OCI-LY7 (cell line): ENCODE measurements at regions of chr6 and their contacts with region 1.

Region 1: DNA sequence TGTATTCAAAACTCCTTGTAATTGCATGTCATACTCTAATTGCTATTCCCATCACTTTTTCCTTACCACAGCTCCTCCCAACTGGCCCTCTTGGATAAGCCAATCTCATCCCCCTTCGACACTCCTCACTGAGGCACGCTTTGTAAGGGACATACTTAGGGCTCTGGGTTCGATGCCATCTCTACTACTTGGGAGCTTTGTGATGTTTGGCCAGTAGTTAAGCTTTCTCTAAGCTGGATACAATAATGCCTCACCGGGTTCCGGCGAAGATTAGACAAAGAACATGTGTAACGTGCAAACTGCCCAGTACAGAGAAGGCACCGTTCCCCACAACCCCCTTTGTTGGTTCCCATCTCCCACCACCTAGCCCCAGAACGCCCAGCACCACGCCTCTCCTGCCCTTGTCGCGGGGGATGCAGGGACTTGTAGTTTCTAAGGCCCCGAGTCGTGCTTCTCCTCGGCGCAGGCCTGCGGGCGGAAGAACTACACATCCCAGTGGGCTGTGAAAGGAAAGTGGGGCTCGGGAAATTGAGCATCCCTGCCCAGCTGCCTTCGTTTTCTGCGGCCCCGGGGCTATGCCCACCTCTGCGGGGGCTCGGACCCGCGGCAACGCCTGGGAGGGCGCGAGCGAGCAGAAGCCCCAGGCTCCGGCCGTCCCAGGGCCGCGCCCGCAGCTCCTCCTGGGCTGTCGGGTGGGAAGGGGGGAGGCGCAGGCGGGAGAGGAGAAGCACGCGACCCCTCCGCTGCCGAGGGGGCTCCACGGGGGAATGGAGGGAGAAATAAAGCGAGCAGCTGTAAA is 1.1 kb upstream of the ZDHHC14 start:
- DNase-seq: peak; percentile 92
- H3K4me3 ChIP-seq: peak overlapping the region; percentile 98
- H3K27ac ChIP-seq: peak overlapping the region; percentile 46
- H3K4me1 ChIP-seq: peaks cover 21% of the 10 kb centered on the region
- CTCF ChIP-seq: no peak

Region 2: DNA sequence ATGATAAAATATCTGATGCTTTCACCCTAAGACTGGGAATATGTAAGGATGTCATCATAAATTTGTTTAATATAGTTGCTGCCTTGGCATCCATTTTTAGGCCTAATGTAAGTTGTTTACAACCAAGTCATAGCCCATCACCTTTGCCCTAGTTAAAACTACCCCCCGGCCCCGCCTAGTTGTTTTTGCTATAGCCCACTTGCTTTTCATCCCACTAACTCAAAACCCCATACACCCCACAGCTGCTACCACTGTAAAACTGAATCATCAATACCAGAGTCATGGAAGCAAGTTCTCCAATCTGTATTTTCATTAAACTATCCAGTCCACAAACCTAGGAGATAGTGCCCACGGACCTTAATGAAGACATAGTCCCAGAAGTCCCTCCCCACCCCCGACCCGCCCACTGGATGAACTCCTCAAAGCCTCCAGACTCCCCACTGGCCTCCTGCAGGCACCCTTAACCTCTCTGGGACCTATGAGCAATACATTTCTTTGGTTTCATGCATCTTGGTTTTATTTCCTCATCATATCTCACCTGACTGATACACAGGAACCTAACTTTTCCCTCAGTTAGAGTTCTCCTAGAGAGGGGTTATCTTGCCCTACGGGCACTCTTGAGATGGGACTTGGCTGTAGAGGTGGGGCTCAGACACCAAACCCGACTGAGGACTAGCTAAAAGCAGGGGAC is 11.4 kb before region 1 on chr6:
- CTCF ChIA-PET with region 1: no interaction called
- POLR2A ChIA-PET with region 1: interaction called, 12 read pairs
- intact Hi-C with region 1: no loop called
- DNase-seq: no peak
- H3K4me3 ChIP-seq: no peak overlapping the region
- H3K27ac ChIP-seq: no peak overlapping the region
- H3K4me1 ChIP-seq: peaks cover 21% of the 10 kb centered on the region
- CTCF ChIP-seq: no peak

Region 3: GRCh38 chr6:157571269-157571668 is 191.4 kb after region 1 on chr6:
- CTCF ChIA-PET with region 1: no interaction called
- POLR2A ChIA-PET with region 1: interaction called, 7 read pairs
- intact Hi-C with region 1: loop called (anchors 5 kb)
- DNase-seq: peak; percentile 91
- H3K4me3 ChIP-seq: peak overlapping the region; percentile 65
- H3K27ac ChIP-seq: peak overlapping the region; percentile 97
- H3K4me1 ChIP-seq: peaks cover 69% of the 10 kb centered on the region
- CTCF ChIP-seq: peak; percentile 42; the same call in 1 of the 2 replicates

Region 4: GRCh38 chr6:157667211-157668008 is 287.6 kb after region 1 on chr6:
- CTCF ChIA-PET with region 1: no interaction called
- POLR2A ChIA-PET with region 1: no interaction called
- intact Hi-C with region 1: loop called (anchors 5 kb)
- DNase-seq: peak; percentile 74
- H3K4me3 ChIP-seq: no peak overlapping the region
- H3K27ac ChIP-seq: no peak overlapping the region
- H3K4me1 ChIP-seq: no peaks in the 10 kb centered on the region
- CTCF ChIP-seq: peak; percentile 98

Region 5: GRCh38 chr6:157885211-157885788 is 505.4 kb after region 1 on chr6:
- CTCF ChIA-PET with region 1: no interaction called
- POLR2A ChIA-PET with region 1: no interaction called
- intact Hi-C with region 1: no loop called
- DNase-seq: no peak
- H3K4me3 ChIP-seq: no peak overlapping the region
- H3K27ac ChIP-seq: no peak overlapping the region
- H3K4me1 ChIP-seq: no peaks in the 10 kb centered on the region
- CTCF ChIP-seq: no peak